CD4-positive, alpha-beta memory T cell (primary cell): ENCODE measurements at regions of chr2 and their contacts with region 1.

Region 1: DNA sequence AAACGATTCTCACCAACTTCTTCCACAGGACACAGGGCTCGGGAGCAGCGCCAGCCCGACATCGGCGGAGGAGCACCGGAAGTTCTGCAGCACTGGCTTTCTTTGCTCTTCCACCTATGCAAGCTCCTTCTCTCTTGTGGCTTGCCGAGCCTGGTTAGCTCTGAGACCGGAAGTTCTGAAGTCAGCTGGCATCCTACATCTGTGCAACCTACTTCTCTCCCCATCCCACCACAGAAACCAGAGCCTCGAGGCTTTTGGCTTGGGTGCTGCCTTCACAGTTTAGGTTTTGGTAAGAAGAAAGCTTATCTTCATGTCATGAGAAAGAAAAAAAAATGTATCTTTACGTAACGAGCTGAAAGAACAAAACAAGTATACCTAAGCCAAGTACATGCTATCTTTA is 111.7 kb downstream of the ANKRD44 start:
- DNase-seq: peak; percentile 93 to 97 (median 96)
- H3K4me3 ChIP-seq: no peak overlapping the region
- H3K4me3 Mint-ChIP-seq: peak overlapping the region; percentile 84 to 99 (median 91)
- H3K27ac ChIP-seq: peak overlapping the region; percentile 73
- H3K27ac Mint-ChIP-seq: peak overlapping the region; percentile 95 to 99 (median 96)
- H3K4me1 ChIP-seq: peaks cover 93% of the 10 kb centered on the region
- H3K4me1 Mint-ChIP-seq: peaks cover 74 to 96% (median 86%) of the 10 kb centered on the region in 4 donors
- H3K27me3 ChIP-seq: no peaks in the 10 kb centered on the region
- H3K27me3 Mint-ChIP-seq: no peaks in the 10 kb centered on the region

Region 2: DNA sequence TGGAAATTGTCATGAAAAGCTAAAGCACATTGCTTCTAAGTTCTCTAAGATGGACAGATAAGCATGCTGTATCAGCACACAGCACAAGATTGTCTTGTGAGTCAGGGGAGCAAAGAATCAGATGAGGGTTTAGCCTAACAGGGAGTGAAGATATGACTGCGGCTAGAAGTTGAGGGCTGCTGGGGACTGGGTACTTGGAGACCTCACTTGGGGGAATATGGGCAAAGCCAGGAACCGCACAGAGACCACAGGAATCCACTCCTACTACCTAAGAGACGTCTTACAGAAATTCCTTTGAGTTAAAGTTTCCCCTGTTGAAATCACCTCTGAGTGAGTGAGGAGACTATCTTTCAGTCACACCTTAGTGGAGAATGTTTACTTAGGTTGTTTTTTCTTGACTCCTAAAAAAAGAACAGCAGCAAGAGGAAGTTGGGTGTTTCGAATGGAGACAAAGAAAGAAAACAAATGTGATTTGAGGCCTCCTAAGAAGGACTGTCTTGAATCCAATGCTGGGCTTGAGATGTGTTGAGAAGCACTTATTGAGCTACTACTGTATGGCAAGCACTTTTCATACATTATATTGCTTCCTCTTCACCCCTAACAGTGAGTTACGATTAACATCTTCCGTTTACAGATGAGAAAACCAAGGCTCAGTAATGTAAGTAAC is 11.0 kb after region 1 on chr2:
- CTCF ChIA-PET with region 1: interaction called, 31 read pairs
- POLR2A ChIA-PET with region 1: interaction called, 1,394 read pairs
- intact Hi-C with region 1: loop called (anchors 1 kb)
- DNase-seq: peak in 4 of 5 donors; percentile 37 to 86 (median 40)
- H3K4me3 ChIP-seq: peak overlapping the region in 1 of 2 donors; percentile 12
- H3K4me3 Mint-ChIP-seq: peak overlapping the region; percentile 38 to 88 (median 74)
- H3K27ac ChIP-seq: peak overlapping the region; percentile 68
- H3K27ac Mint-ChIP-seq: peak overlapping the region; percentile 88 to 100 (median 98)
- H3K4me1 ChIP-seq: peaks cover 100% of the 10 kb centered on the region
- H3K4me1 Mint-ChIP-seq: peaks cover 84 to 100% (median 93%) of the 10 kb centered on the region in 4 donors
- H3K27me3 ChIP-seq: no peaks in the 10 kb centered on the region
- H3K27me3 Mint-ChIP-seq: peaks cover 0 to 3% of the 10 kb centered on the region in 2 donors

Region 3: DNA sequence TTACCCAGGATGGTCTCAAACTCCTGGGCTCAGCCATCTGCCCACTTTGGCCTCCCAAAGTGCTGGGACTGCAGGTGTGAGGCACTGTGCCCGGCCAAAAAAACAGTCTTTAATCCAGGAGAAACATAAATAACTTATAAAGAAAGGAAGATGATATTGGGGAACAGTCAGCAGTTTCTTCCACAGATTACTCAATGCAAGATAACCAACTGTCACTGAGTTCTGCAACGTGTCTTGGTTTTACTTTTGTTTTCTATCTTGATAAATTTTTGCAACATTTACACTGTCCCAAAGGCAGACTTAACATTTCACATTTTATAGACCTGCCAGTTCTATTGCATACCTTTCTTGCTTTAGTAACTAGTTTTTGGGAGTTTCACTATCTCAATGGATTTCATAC is 40.5 kb after region 1 on chr2:
- CTCF ChIA-PET with region 1: interaction called, 12 read pairs
- POLR2A ChIA-PET with region 1: interaction called, 1,394 read pairs
- intact Hi-C with region 1: loop called (anchors 1 kb)
- DNase-seq: no peak
- H3K4me3 ChIP-seq: peak overlapping the region in 1 of 2 donors; percentile 52
- H3K4me3 Mint-ChIP-seq: peak overlapping the region; percentile 80 to 96 (median 87)
- H3K27ac ChIP-seq: peak overlapping the region; percentile 66
- H3K27ac Mint-ChIP-seq: peak overlapping the region; percentile 87 to 99 (median 95)
- H3K4me1 ChIP-seq: peaks cover 97% of the 10 kb centered on the region
- H3K4me1 Mint-ChIP-seq: peaks cover 70 to 93% (median 78%) of the 10 kb centered on the region in 4 donors
- H3K27me3 ChIP-seq: no peaks in the 10 kb centered on the region
- H3K27me3 Mint-ChIP-seq: no peaks in the 10 kb centered on the region

Region 4: GRCh38 chr2:197261808-197262226 is 62.9 kb after region 1 on chr2:
- CTCF ChIA-PET with region 1: interaction called, 5 read pairs
- POLR2A ChIA-PET with region 1: interaction called, 1,394 read pairs
- intact Hi-C with region 1: loop called (anchors 2 kb)
- DNase-seq: peak in 1 of 5 donors; percentile 33
- H3K4me3 ChIP-seq: no peak overlapping the region
- H3K4me3 Mint-ChIP-seq: peak overlapping the region; percentile 43 to 82 (median 64)
- H3K27ac ChIP-seq: peak overlapping the region; percentile 65
- H3K27ac Mint-ChIP-seq: peak overlapping the region; percentile 76 to 98 (median 91)
- H3K4me1 ChIP-seq: peaks cover 87% of the 10 kb centered on the region
- H3K4me1 Mint-ChIP-seq: peaks cover 65 to 91% (median 77%) of the 10 kb centered on the region in 4 donors
- H3K27me3 ChIP-seq: no peaks in the 10 kb centered on the region
- H3K27me3 Mint-ChIP-seq: no peaks in the 10 kb centered on the region

Region 5: DNA sequence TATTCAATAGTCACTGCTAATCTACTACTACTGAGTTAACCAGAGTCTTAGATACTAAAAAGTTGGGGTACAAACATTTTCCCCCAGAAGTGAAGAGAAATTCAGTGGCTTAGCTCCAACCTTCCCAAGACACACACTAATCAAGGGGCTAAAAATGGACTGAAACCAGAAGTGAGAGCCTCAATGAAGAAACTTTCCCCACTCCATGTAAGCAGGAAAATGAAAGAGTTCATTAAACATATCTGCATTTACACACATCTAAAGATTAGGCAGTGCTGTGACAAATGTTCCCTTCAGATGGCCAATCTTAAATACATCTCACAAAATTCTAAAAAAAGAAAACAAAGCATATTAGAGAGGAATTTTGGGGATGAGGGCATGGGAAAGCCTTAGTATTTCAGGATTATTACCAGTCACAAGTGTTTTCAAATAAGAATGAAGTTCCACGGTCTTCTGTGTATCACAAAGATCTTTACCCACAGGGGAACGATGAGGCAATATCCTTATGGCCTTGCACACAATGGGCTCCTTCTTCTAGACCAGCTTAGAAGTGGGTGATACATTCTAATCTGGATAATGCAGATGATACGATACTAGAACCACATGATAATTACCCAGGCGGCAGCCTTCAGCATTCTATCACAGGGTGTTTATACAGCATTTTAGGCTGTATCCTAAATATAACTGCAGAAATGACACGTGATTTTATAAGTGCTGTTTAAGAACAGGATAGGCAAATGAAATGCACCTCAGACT is 94.5 kb after region 1 on chr2:
- CTCF ChIA-PET with region 1: interaction called, 10 read pairs
- POLR2A ChIA-PET with region 1: interaction called, 1,065 read pairs
- intact Hi-C with region 1: no loop called
- DNase-seq: peak; percentile 41 to 79 (median 43)
- H3K4me3 ChIP-seq: peak overlapping the region in 1 of 2 donors; percentile 15
- H3K4me3 Mint-ChIP-seq: peak overlapping the region; percentile 77 to 87 (median 82)
- H3K27ac ChIP-seq: peak overlapping the region; percentile 69
- H3K27ac Mint-ChIP-seq: peak overlapping the region; percentile 90 to 99 (median 96)
- H3K4me1 ChIP-seq: peaks cover 100% of the 10 kb centered on the region
- H3K4me1 Mint-ChIP-seq: peaks cover 69 to 94% (median 84%) of the 10 kb centered on the region in 4 donors
- H3K27me3 ChIP-seq: no peaks in the 10 kb centered on the region
- H3K27me3 Mint-ChIP-seq: no peaks in the 10 kb centered on the region

Region 6: GRCh38 chr2:197416268-197416667 is 217.4 kb after region 1 on chr2:
- CTCF ChIA-PET with region 1: no interaction called
- POLR2A ChIA-PET with region 1: no interaction called
- intact Hi-C with region 1: no loop called
- DNase-seq: no peak
- H3K4me3 ChIP-seq: no peak overlapping the region
- H3K4me3 Mint-ChIP-seq: no peak overlapping the region
- H3K27ac ChIP-seq: no peak overlapping the region
- H3K27ac Mint-ChIP-seq: peak overlapping the region in 3 of 7 donors; percentile 2 to 77 (median 65)
- H3K4me1 ChIP-seq: peaks cover 13% of the 10 kb centered on the region
- H3K4me1 Mint-ChIP-seq: peaks cover 8 to 17% (median 15%) of the 10 kb centered on the region in 4 donors
- H3K27me3 ChIP-seq: no peaks in the 10 kb centered on the region
- H3K27me3 Mint-ChIP-seq: no peaks in the 10 kb centered on the region

Region 7: GRCh38 chr2:197453161-197453914 is 254.4 kb after region 1 on chr2 and contains the start of gene COQ10B:
- CTCF ChIA-PET with region 1: no interaction called
- POLR2A ChIA-PET with region 1: no interaction called
- intact Hi-C with region 1: loop called (anchors 5 kb)
- DNase-seq: peak; percentile 97 to 99 (median 99)
- H3K4me3 ChIP-seq: peak within 1 kb of the TSS; percentile 87 to 88
- H3K4me3 Mint-ChIP-seq: peak within 1 kb of the TSS; percentile 96 to 100 (median 99)
- H3K27ac ChIP-seq: peak within 1 kb of the TSS; percentile 99
- H3K27ac Mint-ChIP-seq: peak within 1 kb of the TSS; percentile 99 to 100 (median 100)
- H3K4me1 ChIP-seq: peaks cover 36% of the 10 kb centered on the region
- H3K4me1 Mint-ChIP-seq: peaks cover 28 to 65% (median 41%) of the 10 kb centered on the region in 4 donors
- H3K27me3 ChIP-seq: no peaks in the 10 kb centered on the region
- H3K27me3 Mint-ChIP-seq: peaks cover 2 to 3% of the 10 kb centered on the region in 2 donors
- total RNA-seq, gene COQ10B: 31.7 to 33.1 TPM

Region 8: DNA sequence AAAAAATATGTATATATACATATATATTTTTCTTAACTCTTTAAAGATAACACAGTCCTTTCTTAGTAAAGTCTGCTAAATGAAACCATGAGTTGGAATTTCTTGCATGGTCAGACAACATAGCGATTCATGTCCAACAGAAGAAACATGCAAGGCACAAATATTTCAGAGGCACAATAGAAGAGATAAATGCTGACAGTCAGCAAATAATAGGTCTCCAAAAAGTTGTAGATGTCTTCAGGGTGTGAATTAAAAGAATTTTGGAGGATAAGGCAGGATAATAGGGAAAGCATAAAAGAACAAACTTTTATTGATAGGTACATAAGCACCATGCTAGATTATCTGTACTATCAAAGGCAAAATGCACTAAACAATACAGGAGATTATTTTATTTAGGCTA is 1405.7 kb after region 1 on chr2:
- CTCF ChIA-PET with region 1: no interaction called
- POLR2A ChIA-PET with region 1: no interaction called
- intact Hi-C with region 1: no loop called
- DNase-seq: no peak
- H3K4me3 ChIP-seq: no peak overlapping the region
- H3K4me3 Mint-ChIP-seq: no peak overlapping the region
- H3K27ac ChIP-seq: no peak overlapping the region
- H3K27ac Mint-ChIP-seq: no peak overlapping the region
- H3K4me1 ChIP-seq: no peaks in the 10 kb centered on the region
- H3K4me1 Mint-ChIP-seq: no peaks in the 10 kb centered on the region
- H3K27me3 ChIP-seq: no peaks in the 10 kb centered on the region
- H3K27me3 Mint-ChIP-seq: no peaks in the 10 kb centered on the region